ENCODE measurements at regions of chr5 and their contacts with region 1.

Region 1: DNA sequence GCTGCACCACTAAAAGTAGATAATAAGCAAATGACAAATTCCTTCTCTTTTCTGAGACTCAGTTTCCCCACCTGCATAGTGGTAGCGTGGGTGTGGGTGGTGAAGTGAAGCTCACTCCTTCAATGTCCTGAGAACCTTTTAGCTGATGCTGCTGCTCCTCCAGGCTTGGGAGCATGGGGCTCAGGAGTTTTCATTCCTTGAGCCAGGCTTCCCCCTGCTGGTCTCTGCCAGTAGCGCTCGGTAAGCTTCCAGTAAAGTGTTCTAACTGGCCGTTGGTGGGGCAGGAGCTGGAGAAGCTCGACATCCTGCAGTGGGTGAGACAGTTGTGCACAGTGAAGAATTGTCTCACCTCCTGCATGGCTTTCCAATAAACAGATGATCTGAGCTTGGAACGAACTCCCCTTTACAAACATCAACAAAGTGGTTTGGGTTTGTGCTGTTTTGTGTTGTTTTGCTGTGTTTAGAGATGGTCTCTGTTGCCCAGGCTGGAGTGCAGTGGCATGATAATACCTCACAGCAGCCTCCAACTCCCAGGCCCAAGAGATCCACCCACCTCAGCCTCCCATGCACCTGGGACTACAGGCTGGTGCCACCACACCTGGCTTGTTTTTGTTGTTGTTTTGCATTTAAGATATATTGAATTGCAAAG is 34.6 kb downstream of the SPARC start:
- DNase-seq: peak; percentile 88
- ATAC-seq: peak; percentile 99
- H3K4me3 Mint-ChIP-seq: no peak overlapping the region
- H3K27ac Mint-ChIP-seq: no peak overlapping the region
- H3K4me1 Mint-ChIP-seq: peaks cover 4% of the 10 kb centered on the region
- H3K27me3 Mint-ChIP-seq: no peaks in the 10 kb centered on the region
- CTCF ChIP-seq: peak; percentile 71

Region 2: DNA sequence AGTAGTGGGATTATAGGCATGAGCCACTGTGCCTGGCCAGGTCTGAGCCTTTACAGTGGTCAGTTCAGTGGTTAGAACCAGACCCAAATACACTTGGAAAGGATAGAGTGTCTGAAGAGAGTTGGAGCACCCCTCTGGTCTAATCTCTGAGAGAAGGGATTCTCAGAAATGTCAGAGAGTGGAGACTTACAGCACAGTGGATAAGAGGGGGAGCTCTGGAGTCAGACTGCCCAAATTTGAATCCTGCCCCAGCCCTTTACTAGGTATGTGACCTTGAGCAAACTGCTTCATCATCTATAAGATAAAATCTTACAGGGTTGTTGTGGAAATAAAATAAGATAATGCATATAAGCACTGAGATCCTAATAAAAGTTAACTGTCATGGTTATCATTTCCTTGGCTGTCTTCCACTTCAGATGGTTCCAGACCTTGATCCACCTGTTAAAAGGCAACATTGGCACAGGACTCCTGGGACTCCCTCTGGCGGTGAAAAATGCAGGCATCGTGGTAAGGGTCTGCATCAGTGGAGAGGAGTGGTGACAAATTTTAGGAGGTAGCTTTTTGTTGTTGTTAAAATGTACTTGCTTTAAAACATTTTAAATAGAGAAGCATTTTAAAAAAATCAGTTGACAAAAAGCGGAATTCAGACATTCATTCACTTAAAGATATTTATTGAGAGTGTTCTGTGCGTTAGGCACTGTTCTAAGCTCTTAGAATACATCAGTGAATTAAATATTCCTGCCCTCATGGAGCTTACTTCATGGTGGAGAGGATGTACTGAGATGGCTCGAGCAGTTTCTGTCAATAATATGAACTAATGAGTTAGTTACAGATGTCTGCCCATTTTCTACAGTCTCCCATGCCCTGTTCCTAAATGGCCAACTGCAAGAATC is 188.7 kb before region 1 on chr5:
- CTCF ChIA-PET with region 1: interaction called, 14 read pairs
- POLR2A ChIA-PET with region 1: no interaction called
- DNase-seq: peak; percentile 72
- ATAC-seq: peak; percentile 93
- H3K4me3 Mint-ChIP-seq: no peak overlapping the region
- H3K27ac Mint-ChIP-seq: no peak overlapping the region
- H3K4me1 Mint-ChIP-seq: no peaks in the 10 kb centered on the region
- H3K27me3 Mint-ChIP-seq: no peaks in the 10 kb centered on the region
- CTCF ChIP-seq: peak; percentile 66; the same call in 1 of the 2 replicates

Region 3: DNA sequence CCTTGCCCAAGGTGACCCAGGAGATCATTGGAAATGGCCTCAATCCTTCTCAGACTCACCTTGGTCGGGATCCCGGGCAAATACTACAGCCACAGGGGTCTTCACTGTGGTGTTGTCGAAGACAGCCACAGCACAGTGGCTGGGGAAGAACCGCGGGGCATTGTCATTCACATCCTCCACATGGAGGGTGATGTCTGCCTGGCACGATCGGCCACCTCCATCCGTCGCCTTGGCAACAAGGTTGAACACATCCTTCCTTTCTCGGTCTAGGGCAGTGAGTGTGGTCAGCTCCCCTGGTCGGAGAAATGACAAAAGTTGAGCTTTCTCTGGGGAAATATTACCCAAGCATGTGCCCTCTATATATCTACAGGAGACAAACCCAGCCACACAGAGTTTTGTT is 117.8 kb before region 1 on chr5:
- CTCF ChIA-PET with region 1: interaction called, 16 read pairs
- POLR2A ChIA-PET with region 1: no interaction called
- DNase-seq: peak; percentile 30
- ATAC-seq: peak; percentile 84
- H3K4me3 Mint-ChIP-seq: no peak overlapping the region
- H3K27ac Mint-ChIP-seq: no peak overlapping the region
- H3K4me1 Mint-ChIP-seq: no peaks in the 10 kb centered on the region
- H3K27me3 Mint-ChIP-seq: no peaks in the 10 kb centered on the region; the same call in 1 of the 2 replicates
- CTCF ChIP-seq: no peak

Region 4: GRCh38 chr5:151619796-151620460 is 32.2 kb before region 1 on chr5:
- CTCF ChIA-PET with region 1: interaction called, 26 read pairs
- POLR2A ChIA-PET with region 1: interaction called, 3 read pairs
- DNase-seq: peak; percentile 40
- ATAC-seq: peak; percentile 90
- H3K4me3 Mint-ChIP-seq: no peak overlapping the region
- H3K27ac Mint-ChIP-seq: no peak overlapping the region
- H3K4me1 Mint-ChIP-seq: peaks cover 38% of the 10 kb centered on the region
- H3K27me3 Mint-ChIP-seq: no peaks in the 10 kb centered on the region; the same call in 1 of the 2 replicates
- CTCF ChIP-seq: no peak

Region 5: GRCh38 chr5:151699071-151699901 is 47.2 kb after region 1 on chr5:
- CTCF ChIA-PET with region 1: interaction called, 10 read pairs
- POLR2A ChIA-PET with region 1: interaction called, 3 read pairs
- DNase-seq: no peak
- ATAC-seq: peak; percentile 20
- H3K4me3 Mint-ChIP-seq: no peak overlapping the region
- H3K27ac Mint-ChIP-seq: peak overlapping the region; percentile 19; the same call in 1 of the 2 replicates
- H3K4me1 Mint-ChIP-seq: peaks cover 28% of the 10 kb centered on the region
- H3K27me3 Mint-ChIP-seq: no peaks in the 10 kb centered on the region; the same call in 1 of the 2 replicates
- CTCF ChIP-seq: no peak

Region 6: GRCh38 chr5:151935135-151935695 is 283.1 kb after region 1 on chr5:
- CTCF ChIA-PET with region 1: no interaction called
- POLR2A ChIA-PET with region 1: no interaction called
- DNase-seq: no peak
- ATAC-seq: no peak
- H3K4me3 Mint-ChIP-seq: no peak overlapping the region
- H3K27ac Mint-ChIP-seq: no peak overlapping the region
- H3K4me1 Mint-ChIP-seq: no peaks in the 10 kb centered on the region
- H3K27me3 Mint-ChIP-seq: peaks cover 8% of the 10 kb centered on the region
- CTCF ChIP-seq: no peak

Measured in WTC11 (cell line).